Aorta (tissue), 5 donors: ENCODE measurements at regions of chr2 and their contacts with region 1.

Region 1: DNA sequence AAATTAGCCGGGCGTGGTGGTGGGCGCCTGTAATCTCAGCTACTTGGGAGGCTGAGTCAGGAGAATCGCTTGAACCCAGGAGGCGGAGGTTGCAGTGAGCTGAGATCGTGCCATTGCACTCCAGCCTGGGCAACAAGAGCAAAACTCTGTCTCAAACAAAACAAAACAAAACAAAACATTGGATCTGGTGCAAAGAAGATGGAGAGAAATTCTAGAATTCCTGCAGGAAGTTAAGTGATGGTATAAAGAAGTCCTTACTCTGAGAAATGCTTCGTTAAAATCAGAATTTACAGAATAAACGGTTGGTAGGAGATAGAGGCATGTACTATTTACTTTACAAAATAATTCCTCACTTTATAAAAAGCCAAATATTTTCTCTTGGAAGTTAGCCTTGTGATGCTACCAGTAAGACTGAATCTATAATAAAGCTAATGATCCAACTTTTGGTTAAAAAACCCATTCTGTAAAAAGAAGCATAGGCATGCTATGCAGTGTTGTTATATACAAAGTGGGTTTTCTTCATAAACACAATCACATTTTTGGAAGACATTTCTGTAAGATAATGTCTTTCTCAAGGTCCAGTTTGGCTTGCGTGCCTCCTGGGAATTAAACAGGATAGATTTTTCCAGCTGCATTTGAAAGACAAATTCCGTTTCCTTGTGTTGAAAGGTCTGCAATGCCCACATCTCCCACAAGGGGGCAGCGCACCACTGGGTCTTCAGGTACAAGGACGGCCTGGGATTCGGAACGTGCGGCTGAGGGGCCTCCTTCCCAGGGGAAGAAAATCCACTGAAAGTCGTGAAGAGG is 35.6 kb upstream of the PNO1 start:
- DNase-seq: peak; percentile 88 to 95
- ATAC-seq: peak; percentile 83
- H3K4me3 ChIP-seq: no peak overlapping the region
- H3K27ac ChIP-seq: no peak overlapping the region
- H3K4me1 ChIP-seq: no peaks in the 10 kb centered on the region
- H3K27me3 ChIP-seq: no peaks in the 10 kb centered on the region

Region 2: DNA sequence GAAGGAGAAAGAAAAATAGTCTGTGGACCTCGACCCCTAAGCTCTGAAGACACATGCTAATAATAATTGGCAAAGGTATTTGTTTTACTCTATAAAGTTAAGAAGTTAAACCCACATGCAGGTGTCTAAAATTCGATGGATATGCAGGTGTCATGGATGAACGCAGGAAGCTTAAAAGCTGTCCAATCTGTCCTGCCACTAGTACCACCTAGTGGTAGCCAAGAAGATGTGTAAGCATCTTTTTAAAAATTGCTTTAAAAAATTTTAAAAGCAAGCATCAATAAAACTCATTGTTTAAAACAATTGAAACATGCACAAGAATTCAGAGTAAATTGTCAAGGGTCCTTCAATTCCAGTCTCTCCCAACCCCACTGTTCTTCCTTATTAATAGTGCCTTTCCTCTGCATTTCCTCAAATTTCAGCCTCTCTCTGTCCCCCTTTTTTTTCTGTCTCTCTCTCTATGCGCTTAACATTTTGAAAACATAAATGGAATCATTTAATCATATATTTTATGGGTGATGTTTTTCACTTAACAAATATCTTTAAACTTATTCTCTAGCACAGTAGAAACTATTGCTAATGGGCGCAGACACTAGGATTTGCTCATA is 160.8 kb after region 1 on chr2:
- intact Hi-C with region 1: loop called (anchors 5 kb)
- DNase-seq: no peak
- ATAC-seq: no peak
- H3K4me3 ChIP-seq: peak overlapping the region in 1 of 2 donors; percentile 18
- H3K27ac ChIP-seq: no peak overlapping the region
- H3K4me1 ChIP-seq: no peaks in the 10 kb centered on the region
- H3K27me3 ChIP-seq: no peaks in the 10 kb centered on the region

Region 3: GRCh38 chr2:68441179-68441993 is 319.3 kb after region 1 on chr2:
- intact Hi-C with region 1: loop called (anchors 5 kb)
- DNase-seq: peak; percentile 87
- ATAC-seq: peak; percentile 95
- H3K4me3 ChIP-seq: no peak overlapping the region
- H3K27ac ChIP-seq: peak overlapping the region in 1 of 2 donors; percentile 28
- H3K4me1 ChIP-seq: peaks cover 0 to 3% of the 10 kb centered on the region in 2 donors
- H3K27me3 ChIP-seq: no peaks in the 10 kb centered on the region